Gastrocnemius medialis (tissue), 4 donors: ENCODE measurements at regions of chr3 and their contacts with region 1.

Region 1: GRCh38 chr3:72818092-72818773 is 30.0 kb downstream of the SHQ1 start:
- DNase-seq: no peak
- ATAC-seq: no peak
- H3K4me3 ChIP-seq: no peak overlapping the region
- H3K27ac ChIP-seq: peak overlapping the region in 1 of 4 donors; percentile 93
- H3K4me1 ChIP-seq: peaks cover 33 to 40% of the 10 kb centered on the region in 2 donors
- H3K27me3 ChIP-seq: no peaks in the 10 kb centered on the region
- CTCF ChIP-seq: peak in 3 of 5 experiments; percentile 25 to 53 (median 46)
- POLR2A ChIP-seq: no peak

Region 2: DNA sequence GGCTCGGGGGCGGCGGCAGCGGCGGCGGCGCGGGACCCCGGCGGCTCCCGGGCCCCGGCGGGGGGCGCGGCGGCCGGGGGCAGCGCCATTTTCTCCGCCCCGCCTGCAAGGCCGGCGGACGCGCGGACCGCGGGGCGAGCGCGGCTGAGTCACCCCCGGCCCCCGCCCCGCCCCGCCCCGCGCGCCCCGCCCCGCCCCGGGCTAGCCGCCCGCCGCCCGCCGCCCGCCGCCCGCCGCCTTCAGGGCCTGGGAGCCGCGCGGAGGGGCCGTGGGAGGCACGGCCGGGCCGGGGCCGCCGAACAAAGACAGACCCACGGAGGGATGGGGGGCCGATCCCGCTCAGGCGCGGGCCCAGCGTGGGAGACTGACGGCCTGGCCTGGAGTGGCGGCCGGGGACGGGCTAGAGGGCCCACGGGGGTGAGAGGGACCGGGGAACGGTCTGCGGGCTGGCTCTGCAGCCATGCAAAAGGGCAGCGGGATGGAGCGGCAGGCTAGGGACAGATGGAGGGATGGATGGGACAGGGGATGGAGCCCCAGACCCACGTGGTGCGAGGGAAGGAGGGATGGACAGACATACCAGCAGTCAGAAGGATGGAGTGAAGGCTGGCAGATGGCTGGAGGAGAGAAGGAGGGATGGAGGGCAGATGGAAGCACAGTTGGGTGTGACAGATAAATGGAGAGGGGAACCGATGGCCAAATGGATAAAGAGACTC is 1092.8 kb before region 1 on chr3 and contains the start of gene EIF4E3:
- in situ Hi-C with region 1: loop called (anchors 10 to 25 kb)
- intact Hi-C with region 1: loop called (anchors 5 kb)
- DNase-seq: peak in 1 of 2 donors; percentile 21
- ATAC-seq: peak; percentile 81 to 82
- H3K4me3 ChIP-seq: peak within 1 kb of the TSS; percentile 67 to 84 (median 78)
- H3K27ac ChIP-seq: peak within 1 kb of the TSS; percentile 76 to 87 (median 85)
- H3K4me1 ChIP-seq: peaks cover 21 to 26% of the 10 kb centered on the region in 2 donors
- H3K27me3 ChIP-seq: no peaks in the 10 kb centered on the region
- CTCF ChIP-seq: no peak
- POLR2A ChIP-seq: no peak
- total RNA-seq, gene EIF4E3: 25.0 to 51.0 (median 42.8) TPM

Region 3: GRCh38 chr3:71885006-71885405 is 933.2 kb before region 1 on chr3:
- in situ Hi-C with region 1: loop called in 2 of 4 experiments (anchors 10 kb)
- intact Hi-C with region 1: no loop called
- DNase-seq: no peak
- ATAC-seq: no peak
- H3K4me3 ChIP-seq: no peak overlapping the region
- H3K27ac ChIP-seq: no peak overlapping the region
- H3K4me1 ChIP-seq: no peaks in the 10 kb centered on the region
- H3K27me3 ChIP-seq: no peaks in the 10 kb centered on the region
- CTCF ChIP-seq: no peak
- POLR2A ChIP-seq: no peak

Region 4: GRCh38 chr3:71962561-71963240 is 855.5 kb before region 1 on chr3:
- in situ Hi-C with region 1: loop called (anchors 10 to 25 kb)
- intact Hi-C with region 1: loop called (anchors 5 kb)
- DNase-seq: no peak
- ATAC-seq: no peak
- H3K4me3 ChIP-seq: no peak overlapping the region
- H3K27ac ChIP-seq: no peak overlapping the region
- H3K4me1 ChIP-seq: no peaks in the 10 kb centered on the region
- H3K27me3 ChIP-seq: no peaks in the 10 kb centered on the region
- CTCF ChIP-seq: no peak
- POLR2A ChIP-seq: no peak

Region 5: GRCh38 chr3:72270072-72270681 is 548.1 kb before region 1 on chr3:
- in situ Hi-C with region 1: no loop called
- intact Hi-C with region 1: loop called (anchors 10 kb)
- DNase-seq: peak; percentile 83 to 89
- ATAC-seq: peak; percentile 95 to 97
- H3K4me3 ChIP-seq: no peak overlapping the region
- H3K27ac ChIP-seq: peak overlapping the region; percentile 27 to 59 (median 54)
- H3K4me1 ChIP-seq: peaks cover 24 to 35% of the 10 kb centered on the region in 2 donors
- H3K27me3 ChIP-seq: no peaks in the 10 kb centered on the region
- CTCF ChIP-seq: no peak
- POLR2A ChIP-seq: no peak

Region 6: DNA sequence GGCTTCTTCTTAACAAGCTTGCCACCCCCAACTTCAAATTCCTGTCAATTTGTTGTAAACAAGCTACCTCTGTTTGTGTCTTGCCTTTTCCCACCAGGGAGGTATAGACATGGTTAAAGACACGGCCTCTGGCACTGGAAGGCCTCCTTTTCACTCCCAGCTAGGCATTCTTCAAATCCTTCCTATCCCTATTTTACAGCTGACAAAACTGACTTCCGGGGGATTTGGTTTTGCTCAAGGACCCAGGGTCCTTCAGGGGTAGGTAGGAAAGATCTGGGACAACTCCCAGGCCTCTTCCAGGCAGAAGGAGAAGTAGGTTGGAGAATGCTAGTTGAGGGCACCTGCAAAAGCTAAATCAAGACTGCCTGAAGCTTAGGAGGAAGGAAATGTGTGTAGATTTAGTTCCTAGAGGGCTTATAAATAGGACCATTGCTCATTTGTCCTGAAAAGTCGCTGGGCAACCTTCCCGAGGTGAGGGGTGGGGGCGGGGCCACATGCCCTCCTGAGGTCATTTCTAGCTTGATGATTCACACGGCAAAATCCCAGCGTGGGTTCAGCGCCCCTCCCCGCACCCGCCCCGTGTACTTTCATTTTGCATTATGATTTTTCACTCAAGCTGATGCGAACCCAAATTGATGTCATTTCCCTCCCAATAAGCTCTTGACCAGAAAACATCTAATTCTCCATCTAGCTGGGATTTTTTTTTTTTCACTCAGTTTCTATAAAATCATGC is 335.5 kb before region 1 on chr3:
- in situ Hi-C with region 1: no loop called
- intact Hi-C with region 1: loop called (anchors 5 kb)
- DNase-seq: peak; percentile 66 to 91
- ATAC-seq: peak; percentile 98
- H3K4me3 ChIP-seq: peak overlapping the region; percentile 23 to 45 (median 42)
- H3K27ac ChIP-seq: peak overlapping the region; percentile 75 to 83 (median 79)
- H3K4me1 ChIP-seq: peaks cover 12 to 23% of the 10 kb centered on the region in 2 donors
- H3K27me3 ChIP-seq: no peaks in the 10 kb centered on the region
- CTCF ChIP-seq: no peak
- POLR2A ChIP-seq: peak; percentile 4 to 22

Region 7: DNA sequence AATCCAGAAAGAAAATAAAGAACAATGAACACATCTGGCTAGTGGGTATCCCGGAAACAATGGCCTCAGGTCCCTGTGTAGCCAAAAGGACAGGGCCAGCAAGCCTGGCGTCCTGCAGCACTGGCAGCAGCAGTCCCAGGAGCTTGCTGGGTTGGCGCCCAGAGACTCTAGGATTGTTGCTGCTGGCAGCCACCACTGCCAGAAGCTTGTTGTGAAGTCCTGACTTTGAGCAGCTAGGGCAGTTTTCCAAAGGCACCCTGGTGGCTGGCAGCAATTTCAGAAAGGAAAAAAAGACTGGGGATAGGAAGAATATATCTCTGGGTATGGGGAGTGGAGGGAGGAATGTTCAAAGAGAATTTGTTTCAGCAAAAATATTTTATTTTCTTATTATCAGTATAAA is 18.7 kb after region 1 on chr3:
- in situ Hi-C with region 1: no loop called
- intact Hi-C with region 1: loop called (anchors 2 kb)
- DNase-seq: peak; percentile 83 to 92
- ATAC-seq: peak; percentile 99
- H3K4me3 ChIP-seq: no peak overlapping the region
- H3K27ac ChIP-seq: peak overlapping the region in 3 of 4 donors; percentile 2 to 29 (median 27)
- H3K4me1 ChIP-seq: peaks cover 5% of the 10 kb centered on the region in 2 donors
- H3K27me3 ChIP-seq: no peaks in the 10 kb centered on the region
- CTCF ChIP-seq: peak in 1 of 5 experiments; percentile 40
- POLR2A ChIP-seq: no peak

Region 8: GRCh38 chr3:73080216-73080966 is 262.2 kb after region 1 on chr3:
- in situ Hi-C with region 1: no loop called
- intact Hi-C with region 1: no loop called
- DNase-seq: no peak
- ATAC-seq: no peak
- H3K4me3 ChIP-seq: no peak overlapping the region
- H3K27ac ChIP-seq: no peak overlapping the region
- H3K4me1 ChIP-seq: no peaks in the 10 kb centered on the region
- H3K27me3 ChIP-seq: no peaks in the 10 kb centered on the region
- CTCF ChIP-seq: no peak
- POLR2A ChIP-seq: no peak